GM10248 (cell line): ENCODE measurements at regions of chr14 and their contacts with region 1.

Region 1: GRCh38 chr14:103104654-103105452 is 10.3 kb downstream of the EXOC3L4 start:
- DNase-seq: peak; percentile 84
- CTCF ChIP-seq: peak; percentile 99

Region 2: GRCh38 chr14:103085106-103086091 is 19.5 kb before region 1 on chr14:
- CTCF ChIA-PET with region 1: interaction called, 36 read pairs
- POLR2A ChIA-PET with region 1: no interaction called
- DNase-seq: no peak
- CTCF ChIP-seq: no peak

Region 3: GRCh38 chr14:103121846-103122584 is 17.2 kb after region 1 on chr14:
- CTCF ChIA-PET with region 1: interaction called, 73 read pairs
- POLR2A ChIA-PET with region 1: no interaction called
- DNase-seq: no peak
- CTCF ChIP-seq: no peak

Region 4: DNA sequence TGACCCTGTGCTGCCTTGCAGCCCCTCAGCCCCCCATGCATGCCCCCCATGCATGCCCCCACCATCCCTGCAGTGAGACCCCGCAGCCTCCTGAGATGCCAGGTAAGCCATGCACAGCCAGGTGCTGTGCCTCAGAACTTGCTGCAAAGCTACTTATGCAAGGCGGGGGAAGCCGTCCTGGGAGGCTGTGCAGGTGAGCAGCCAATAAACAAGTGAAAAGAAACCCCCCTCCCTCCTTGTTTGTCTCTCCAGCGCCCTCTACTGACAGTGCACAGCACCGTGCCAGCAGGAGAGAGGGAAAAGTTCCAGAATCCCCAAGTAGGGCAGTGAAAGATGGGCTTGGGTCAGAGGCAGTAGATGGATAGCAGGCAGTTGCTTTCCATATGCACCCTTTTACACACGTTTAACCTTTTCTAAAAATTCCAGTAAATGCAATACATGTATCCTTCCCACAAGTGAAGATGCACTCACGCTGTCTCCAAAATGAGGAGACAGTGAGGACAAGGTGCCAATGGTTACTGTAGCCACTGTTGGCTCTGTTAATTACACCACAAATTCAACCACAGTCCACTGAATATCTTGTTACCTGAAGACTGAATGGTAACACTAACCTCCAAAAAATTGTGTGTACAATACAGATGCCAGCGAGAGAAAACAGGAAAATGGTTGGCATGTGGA is 36.4 kb after region 1 on chr14:
- CTCF ChIA-PET with region 1: interaction called, 121 read pairs
- POLR2A ChIA-PET with region 1: no interaction called
- DNase-seq: peak; percentile 74
- CTCF ChIP-seq: peak; percentile 79

Region 5: DNA sequence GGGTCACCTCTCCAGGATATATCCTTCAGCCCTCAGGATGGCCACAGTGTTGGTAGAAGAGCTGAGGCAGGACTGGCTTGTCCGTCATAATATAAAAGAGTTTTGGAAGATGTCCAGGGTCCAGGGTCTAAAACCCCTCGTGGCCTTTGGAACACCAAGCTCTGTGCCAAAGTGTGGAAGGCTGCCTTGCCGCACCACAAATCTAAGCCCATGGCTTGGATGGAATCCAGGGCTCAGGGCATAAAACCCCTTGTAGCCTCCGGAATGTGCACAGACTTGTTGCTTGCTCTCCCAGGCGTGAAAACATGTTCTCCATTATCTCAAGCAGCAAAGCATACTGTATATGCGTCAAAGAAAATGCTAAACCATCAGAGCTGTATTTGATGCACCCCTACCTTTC is 65.1 kb after region 1 on chr14:
- CTCF ChIA-PET with region 1: interaction called, 10 read pairs
- POLR2A ChIA-PET with region 1: no interaction called
- DNase-seq: no peak
- CTCF ChIP-seq: no peak

Region 6: DNA sequence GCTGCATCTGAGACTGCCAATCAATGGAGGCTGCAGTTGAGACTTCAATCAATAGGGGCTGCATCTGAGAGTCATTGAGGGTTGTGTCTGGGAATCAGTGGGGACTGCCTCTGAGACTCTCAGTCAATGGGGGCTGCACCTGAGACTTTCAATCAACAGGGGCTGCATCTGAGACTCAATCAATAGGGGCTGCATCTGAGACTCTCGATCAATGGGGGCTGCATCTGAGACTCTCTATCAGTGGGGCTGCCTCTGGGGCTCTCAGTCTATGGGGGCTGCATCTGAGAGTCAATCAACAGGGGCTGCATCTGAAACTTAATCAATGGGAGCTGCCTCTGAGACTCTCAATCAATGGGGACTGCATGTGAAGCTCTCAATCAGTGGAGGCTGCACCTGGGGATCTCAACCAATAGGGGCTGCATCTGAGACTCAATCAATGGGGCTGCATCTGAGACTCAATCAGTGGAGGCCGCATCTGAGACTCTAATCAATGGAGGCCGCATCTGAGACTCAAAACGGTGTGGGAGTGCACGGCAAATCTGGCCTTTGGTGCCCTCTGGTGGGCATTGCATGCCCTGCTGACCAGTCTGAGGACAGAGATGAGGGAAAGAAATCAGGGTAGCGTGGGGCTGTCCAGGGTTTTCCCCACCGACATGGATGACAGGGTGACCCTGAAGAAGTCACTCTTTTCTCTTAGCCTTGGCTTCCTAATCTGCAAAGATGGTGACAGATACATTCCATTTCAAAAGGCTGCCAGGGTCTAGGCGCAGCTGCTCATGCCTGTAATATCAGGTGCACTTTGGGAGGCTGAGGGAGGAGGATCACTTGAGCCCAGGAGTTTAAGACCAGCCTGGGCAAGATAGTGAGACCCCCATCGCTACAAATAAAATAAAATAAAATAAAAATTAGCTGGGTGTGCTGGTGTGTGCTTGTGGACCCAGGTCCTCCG is 187.8 kb after region 1 on chr14:
- CTCF ChIA-PET with region 1: interaction called, 66 read pairs
- POLR2A ChIA-PET with region 1: no interaction called
- DNase-seq: peak; percentile 88
- CTCF ChIP-seq: peak; percentile 94